CD8-positive, alpha-beta memory T cell (primary cell): ENCODE measurements at regions of chr6 and their contacts with region 1.

Region 1: GRCh38 chr6:105992315-105992961 is 93.7 kb upstream of the PRDM1 start:
- DNase-seq: peak; percentile 84 to 91 (median 87)
- H3K4me3 ChIP-seq: peak overlapping the region; percentile 93
- H3K4me3 Mint-ChIP-seq: peak overlapping the region; percentile 88 to 99 (median 92)
- H3K27ac ChIP-seq: peak overlapping the region; percentile 79
- H3K27ac Mint-ChIP-seq: peak overlapping the region; percentile 91 to 99 (median 96)
- H3K4me1 ChIP-seq: peaks cover 22% of the 10 kb centered on the region
- H3K4me1 Mint-ChIP-seq: peaks cover 21 to 42% (median 30%) of the 10 kb centered on the region in 3 donors
- H3K27me3 ChIP-seq: peaks cover 12% of the 10 kb centered on the region
- H3K27me3 Mint-ChIP-seq: peaks cover 10 to 23% of the 10 kb centered on the region in 2 donors

Region 2: DNA sequence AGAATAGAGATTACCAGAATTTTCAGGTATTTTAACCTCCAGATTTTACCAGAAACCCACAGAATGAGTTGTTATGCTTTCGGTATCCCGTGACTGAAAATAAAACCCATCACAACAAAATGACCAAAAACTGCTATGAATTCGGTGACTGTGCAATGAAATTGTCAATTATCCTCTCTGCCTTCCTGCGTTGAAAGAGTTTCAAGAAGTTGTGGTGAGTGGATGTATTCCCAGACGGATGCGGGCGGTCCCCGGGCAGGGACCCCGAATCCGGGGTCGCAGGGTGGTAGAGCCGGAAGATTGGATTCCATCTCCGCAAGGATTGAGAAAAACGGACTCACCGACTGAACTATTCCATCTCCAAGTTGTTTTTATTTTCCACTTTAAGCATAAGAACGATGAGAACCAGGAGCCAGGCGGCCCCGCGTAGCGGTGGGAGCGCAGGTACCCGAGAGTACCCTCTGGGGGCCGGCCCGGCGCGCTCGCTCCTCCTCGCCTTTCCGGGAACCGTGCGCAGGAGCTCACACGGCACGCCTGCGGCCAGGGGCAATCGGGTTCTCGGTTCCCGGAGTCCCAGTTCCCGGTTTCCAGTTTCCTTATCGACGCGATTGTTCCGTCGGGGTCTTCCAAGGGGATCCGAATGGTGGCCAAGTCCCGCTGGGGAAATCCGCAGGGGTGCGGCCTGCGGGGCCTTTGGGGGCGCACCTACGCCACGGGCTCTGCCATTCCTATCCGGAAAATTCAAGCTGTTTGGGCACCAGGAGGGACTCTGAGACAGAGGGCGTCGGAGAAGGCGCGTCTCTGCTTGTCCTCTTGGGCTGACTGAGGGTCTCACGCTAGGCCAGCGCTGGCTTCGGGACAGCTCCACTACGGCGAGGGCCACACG is 11.2 kb before region 1 on chr6:
- CTCF ChIA-PET with region 1: interaction called, 48 read pairs
- POLR2A ChIA-PET with region 1: interaction called, 19 read pairs
- DNase-seq: peak; percentile 22 to 61 (median 28)
- H3K4me3 ChIP-seq: peak overlapping the region; percentile 57
- H3K4me3 Mint-ChIP-seq: peak overlapping the region; percentile 89 to 97 (median 94)
- H3K27ac ChIP-seq: no peak overlapping the region
- H3K27ac Mint-ChIP-seq: peak overlapping the region in 6 of 8 donors; percentile 45 to 91 (median 86)
- H3K4me1 ChIP-seq: peaks cover 18% of the 10 kb centered on the region
- H3K4me1 Mint-ChIP-seq: peaks cover 20 to 31% (median 28%) of the 10 kb centered on the region in 3 donors
- H3K27me3 ChIP-seq: peaks cover 8% of the 10 kb centered on the region
- H3K27me3 Mint-ChIP-seq: peaks cover 32 to 33% of the 10 kb centered on the region in 2 donors

Region 3: DNA sequence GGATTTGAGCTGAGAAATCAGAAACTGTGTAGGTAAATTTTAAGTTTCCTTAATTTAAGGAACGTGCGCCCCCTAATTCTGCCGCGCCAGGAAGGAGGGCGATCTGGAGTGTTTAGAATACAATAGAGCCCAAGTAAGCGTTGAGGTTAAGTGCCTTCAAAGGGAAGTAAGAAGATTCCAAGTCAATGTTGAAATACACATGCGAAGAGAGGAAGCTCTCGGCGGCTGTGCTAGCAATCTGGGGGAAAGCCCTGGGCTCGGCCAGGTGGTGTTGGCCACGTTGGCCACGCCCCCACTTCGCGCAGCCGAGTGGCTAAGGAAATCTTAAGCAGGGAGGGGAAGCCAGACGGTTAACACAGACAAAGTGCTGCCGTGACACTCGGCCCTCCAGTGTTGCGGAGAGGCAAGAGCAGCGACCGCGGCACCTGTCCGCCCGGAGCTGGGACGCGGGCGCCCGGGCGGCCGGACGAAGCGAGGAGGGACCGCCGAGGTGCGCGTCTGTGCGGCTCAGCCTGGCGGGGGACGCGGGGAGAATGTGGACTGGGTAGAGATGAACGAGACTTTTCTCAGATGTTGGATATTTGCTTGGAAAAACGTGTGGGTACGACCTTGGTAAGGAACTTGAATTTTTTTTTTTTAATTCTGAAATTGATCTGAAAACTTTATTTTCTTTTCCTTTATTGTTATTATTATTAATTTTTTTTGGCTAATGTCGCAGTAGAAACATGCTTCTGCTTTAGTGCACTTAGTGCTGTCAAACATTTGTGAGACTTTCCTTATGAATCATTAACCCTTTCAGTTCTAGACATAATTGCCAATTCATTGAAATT is 93.8 kb after region 1 on chr6 and contains the start of gene PRDM1:
- CTCF ChIA-PET with region 1: interaction called, 19 read pairs
- POLR2A ChIA-PET with region 1: interaction called, 8 read pairs
- DNase-seq: peak; percentile 52 to 88 (median 81)
- H3K4me3 ChIP-seq: peak within 1 kb of the TSS; percentile 61
- H3K4me3 Mint-ChIP-seq: peak within 1 kb of the TSS; percentile 90 to 97 (median 93)
- H3K27ac ChIP-seq: peak within 1 kb of the TSS; percentile 52
- H3K27ac Mint-ChIP-seq: peak within 1 kb of the TSS; percentile 61 to 97 (median 92)
- H3K4me1 ChIP-seq: peaks cover 66% of the 10 kb centered on the region
- H3K4me1 Mint-ChIP-seq: peaks cover 80 to 94% (median 93%) of the 10 kb centered on the region in 3 donors
- H3K27me3 ChIP-seq: no peaks in the 10 kb centered on the region
- H3K27me3 Mint-ChIP-seq: peaks cover 0 to 4% of the 10 kb centered on the region in 2 donors
- total RNA-seq, gene PRDM1: 88.2 to 90.7 TPM

Region 4: DNA sequence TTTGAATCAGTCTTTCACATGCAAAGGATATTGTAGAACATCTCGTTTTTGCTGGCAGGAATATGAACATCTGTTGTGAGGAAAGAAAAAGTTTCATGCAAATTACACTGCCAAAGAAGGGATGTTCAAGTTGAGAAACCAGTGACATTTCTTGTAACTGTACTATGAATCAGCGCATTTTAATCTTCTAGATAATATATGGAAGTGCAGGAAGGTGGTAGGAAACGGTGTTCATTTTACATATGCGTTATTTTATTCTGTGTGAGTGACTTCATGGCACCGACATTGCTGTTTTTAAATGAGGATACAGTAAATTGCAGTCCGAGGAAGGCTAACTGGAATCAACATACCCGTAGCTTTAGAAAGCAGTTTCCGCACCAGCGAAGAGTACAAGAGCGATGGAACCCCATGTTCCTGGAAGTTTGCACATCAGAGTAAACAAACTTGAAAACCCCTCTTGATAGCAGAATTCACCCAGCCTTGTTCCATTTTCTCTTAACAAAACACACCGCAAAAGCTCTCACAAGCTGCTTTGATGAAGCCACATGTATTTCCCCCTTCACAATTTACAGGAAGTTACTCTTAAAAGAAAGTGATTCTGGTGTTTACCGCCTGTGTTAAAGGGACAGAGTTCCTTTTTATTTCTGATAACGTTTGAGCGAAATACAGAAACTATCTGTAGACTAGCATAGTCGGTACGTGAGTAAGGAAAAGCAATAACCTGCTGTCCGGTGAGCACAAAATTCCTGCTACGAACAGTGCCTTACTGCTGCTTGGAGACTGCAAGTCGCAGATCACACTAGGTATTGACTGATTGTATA is 105.2 kb after region 1 on chr6:
- CTCF ChIA-PET with region 1: interaction called, 3 read pairs
- POLR2A ChIA-PET with region 1: interaction called, 22 read pairs
- DNase-seq: peak in 4 of 5 donors; percentile 37 to 87 (median 78)
- H3K4me3 ChIP-seq: peak overlapping the region; percentile 75
- H3K4me3 Mint-ChIP-seq: peak overlapping the region; percentile 92 to 100 (median 96)
- H3K27ac ChIP-seq: peak overlapping the region; percentile 76
- H3K27ac Mint-ChIP-seq: peak overlapping the region; percentile 81 to 98 (median 95)
- H3K4me1 ChIP-seq: peaks cover 64% of the 10 kb centered on the region
- H3K4me1 Mint-ChIP-seq: peaks cover 67 to 94% (median 91%) of the 10 kb centered on the region in 3 donors
- H3K27me3 ChIP-seq: no peaks in the 10 kb centered on the region
- H3K27me3 Mint-ChIP-seq: no peaks in the 10 kb centered on the region

Region 5: GRCh38 chr6:106103728-106104109 is 111.3 kb after region 1 on chr6:
- CTCF ChIA-PET with region 1: no interaction called
- POLR2A ChIA-PET with region 1: interaction called, 22 read pairs
- DNase-seq: peak in 4 of 5 donors; percentile 48 to 68 (median 55)
- H3K4me3 ChIP-seq: peak overlapping the region; percentile 75
- H3K4me3 Mint-ChIP-seq: peak overlapping the region; percentile 92 to 100 (median 96)
- H3K27ac ChIP-seq: peak overlapping the region; percentile 52
- H3K27ac Mint-ChIP-seq: peak overlapping the region; percentile 66 to 98 (median 95)
- H3K4me1 ChIP-seq: peaks cover 55% of the 10 kb centered on the region
- H3K4me1 Mint-ChIP-seq: peaks cover 69 to 99% (median 97%) of the 10 kb centered on the region in 3 donors
- H3K27me3 ChIP-seq: no peaks in the 10 kb centered on the region
- H3K27me3 Mint-ChIP-seq: no peaks in the 10 kb centered on the region

Region 6: GRCh38 chr6:106194949-106195921 is 202.8 kb after region 1 on chr6:
- CTCF ChIA-PET with region 1: no interaction called
- POLR2A ChIA-PET with region 1: interaction called, 14 read pairs
- DNase-seq: peak in 3 of 5 donors; percentile 6 to 56 (median 34)
- H3K4me3 ChIP-seq: peak overlapping the region; percentile 27
- H3K4me3 Mint-ChIP-seq: peak overlapping the region; percentile 70 to 87 (median 72)
- H3K27ac ChIP-seq: peak overlapping the region; percentile 4
- H3K27ac Mint-ChIP-seq: peak overlapping the region; percentile 71 to 96 (median 89)
- H3K4me1 ChIP-seq: peaks cover 46% of the 10 kb centered on the region
- H3K4me1 Mint-ChIP-seq: peaks cover 38 to 57% (median 44%) of the 10 kb centered on the region in 3 donors
- H3K27me3 ChIP-seq: no peaks in the 10 kb centered on the region
- H3K27me3 Mint-ChIP-seq: no peaks in the 10 kb centered on the region